Activated naive CD4-positive, alpha-beta T cell treated with anti-CD3 and anti-CD28 coated beads for 36 hours (primary cell): ENCODE measurements at regions of chr9 and their contacts with region 1.

Region 1: DNA sequence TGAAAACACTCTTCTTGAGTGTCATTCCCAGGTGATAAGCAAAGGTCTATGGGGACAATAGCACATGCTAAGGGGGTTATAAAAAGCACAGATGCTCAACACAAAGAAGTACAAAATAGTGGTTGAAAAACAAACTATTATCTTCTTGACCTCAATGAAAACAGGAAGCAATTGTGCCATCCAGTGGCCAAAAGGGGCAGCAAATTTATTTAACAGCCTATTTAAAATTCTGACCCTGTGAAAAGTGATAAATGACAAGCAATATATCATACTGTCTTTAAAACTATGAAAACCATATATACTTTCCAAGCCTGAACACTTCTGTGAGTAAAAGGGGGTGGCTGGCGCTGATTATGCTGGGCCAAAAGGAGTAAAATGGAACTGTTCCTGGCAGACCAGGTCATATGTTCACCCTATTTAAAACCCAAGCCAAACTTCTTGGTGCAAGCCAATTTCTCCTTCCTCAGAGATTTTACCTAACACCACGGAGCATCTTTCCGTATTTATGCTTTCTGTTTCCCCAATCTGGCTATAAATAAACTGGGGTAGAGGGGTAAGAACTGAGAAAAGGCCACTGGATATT is 29.7 kb downstream of the TEX10 start:
- DNase-seq: peak; percentile 52
- H3K4me3 Mint-ChIP-seq: no peak overlapping the region
- H3K27ac Mint-ChIP-seq: no peak overlapping the region
- H3K4me1 Mint-ChIP-seq: peaks cover 12% of the 10 kb centered on the region
- H3K27me3 Mint-ChIP-seq: no peaks in the 10 kb centered on the region

Region 2: GRCh38 chr9:99266255-99267023 is 1056.6 kb before region 1 on chr9:
- CTCF ChIA-PET with region 1: no interaction called
- intact Hi-C with region 1: loop called (anchors 1 kb)
- DNase-seq: peak; percentile 82
- H3K4me3 Mint-ChIP-seq: peak overlapping the region; percentile 19
- H3K27ac Mint-ChIP-seq: no peak overlapping the region
- H3K4me1 Mint-ChIP-seq: peaks cover 17% of the 10 kb centered on the region
- H3K27me3 Mint-ChIP-seq: peaks cover 1% of the 10 kb centered on the region

Region 3: DNA sequence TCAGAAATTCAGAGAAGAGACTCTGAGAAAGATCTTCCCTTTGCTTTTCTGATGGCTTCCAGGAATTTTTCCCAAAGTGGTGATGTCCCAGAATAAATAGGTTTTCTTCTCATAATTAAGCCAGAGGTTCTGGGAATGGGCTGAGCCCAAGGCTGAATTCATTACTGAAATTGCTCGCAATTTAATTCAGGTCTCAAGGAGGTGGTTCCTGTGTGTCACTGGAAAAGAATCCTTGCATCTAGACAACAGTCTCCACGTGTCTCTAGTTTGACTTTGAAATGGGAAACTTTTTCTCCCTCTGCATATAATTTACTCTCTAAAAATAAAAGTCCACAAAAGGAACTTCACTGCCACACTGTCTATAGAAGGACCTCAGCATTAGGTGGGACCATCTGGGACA is 444.4 kb before region 1 on chr9:
- CTCF ChIA-PET with region 1: no interaction called
- intact Hi-C with region 1: loop called (anchors 5 kb)
- DNase-seq: no peak
- H3K4me3 Mint-ChIP-seq: no peak overlapping the region
- H3K27ac Mint-ChIP-seq: no peak overlapping the region
- H3K4me1 Mint-ChIP-seq: peaks cover 6% of the 10 kb centered on the region
- H3K27me3 Mint-ChIP-seq: peaks cover 4% of the 10 kb centered on the region

Region 4: GRCh38 chr9:100216178-100216787 is 106.8 kb before region 1 on chr9:
- CTCF ChIA-PET with region 1: interaction called, 3 read pairs
- intact Hi-C with region 1: loop called (anchors 5 kb)
- DNase-seq: peak; percentile 83
- H3K4me3 Mint-ChIP-seq: no peak overlapping the region
- H3K27ac Mint-ChIP-seq: no peak overlapping the region
- H3K4me1 Mint-ChIP-seq: no peaks in the 10 kb centered on the region
- H3K27me3 Mint-ChIP-seq: no peaks in the 10 kb centered on the region

Region 5: GRCh38 chr9:100346836-100347235 is 23.8 kb after region 1 on chr9:
- CTCF ChIA-PET with region 1: interaction called, 10 read pairs
- intact Hi-C with region 1: no loop called
- DNase-seq: no peak
- H3K4me3 Mint-ChIP-seq: no peak overlapping the region
- H3K27ac Mint-ChIP-seq: no peak overlapping the region
- H3K4me1 Mint-ChIP-seq: peaks cover 46% of the 10 kb centered on the region
- H3K27me3 Mint-ChIP-seq: no peaks in the 10 kb centered on the region

Region 6: GRCh38 chr9:100377015-100377414 is 54.0 kb after region 1 on chr9:
- CTCF ChIA-PET with region 1: no interaction called
- intact Hi-C with region 1: no loop called
- DNase-seq: no peak
- H3K4me3 Mint-ChIP-seq: no peak overlapping the region
- H3K27ac Mint-ChIP-seq: no peak overlapping the region
- H3K4me1 Mint-ChIP-seq: no peaks in the 10 kb centered on the region
- H3K27me3 Mint-ChIP-seq: no peaks in the 10 kb centered on the region